ENCODE measurements at regions of chr11 and their contacts with region 1.

Region 1: GRCh38 chr11:35822815-35823495 is 120.9 kb upstream of the LDLRAD3 start:
- DNase-seq: no peak
- H3K4me3 ChIP-seq: no peak overlapping the region
- H3K27ac ChIP-seq: no peak overlapping the region
- H3K4me1 ChIP-seq: peaks cover 0 to 2% (median 0%) of the 10 kb centered on the region in 4 experiments; a peak in 1 of 7 replicates
- H3K27me3 ChIP-seq: peaks cover 0 to 2% (median 0%) of the 10 kb centered on the region in 4 experiments; a peak in 1 of 7 replicates
- CTCF ChIP-seq: no peak
- EP300 ChIP-seq: no peak
- POLR2A ChIP-seq: no peak
- RAD21 ChIP-seq: no peak

Region 2: GRCh38 chr11:35785287-35786167 is 37.4 kb before region 1 on chr11:
- CTCF ChIA-PET with region 1: interaction called, 17 read pairs
- POLR2A ChIA-PET with region 1: no interaction called
- DNase-seq: no peak
- H3K4me3 ChIP-seq: no peak overlapping the region
- H3K27ac ChIP-seq: no peak overlapping the region
- H3K4me1 ChIP-seq: peaks cover 0 to 2% (median 0%) of the 10 kb centered on the region in 4 experiments; a peak in 1 of 7 replicates
- H3K27me3 ChIP-seq: no peaks in the 10 kb centered on the region
- CTCF ChIP-seq: no peak
- EP300 ChIP-seq: no peak
- POLR2A ChIP-seq: no peak
- RAD21 ChIP-seq: no peak

Region 3: GRCh38 chr11:35893796-35894475 is 71.0 kb after region 1 on chr11:
- CTCF ChIA-PET with region 1: interaction called, 13 read pairs
- POLR2A ChIA-PET with region 1: interaction called, 3 read pairs
- DNase-seq: no peak
- H3K4me3 ChIP-seq: no peak overlapping the region
- H3K27ac ChIP-seq: no peak overlapping the region
- H3K4me1 ChIP-seq: peaks cover 0 to 4% (median under 1%) of the 10 kb centered on the region in 4 experiments; a peak in 3 of 7 replicates
- H3K27me3 ChIP-seq: no peaks in the 10 kb centered on the region
- CTCF ChIP-seq: no peak
- EP300 ChIP-seq: no peak
- POLR2A ChIP-seq: no peak
- RAD21 ChIP-seq: no peak

Region 4: DNA sequence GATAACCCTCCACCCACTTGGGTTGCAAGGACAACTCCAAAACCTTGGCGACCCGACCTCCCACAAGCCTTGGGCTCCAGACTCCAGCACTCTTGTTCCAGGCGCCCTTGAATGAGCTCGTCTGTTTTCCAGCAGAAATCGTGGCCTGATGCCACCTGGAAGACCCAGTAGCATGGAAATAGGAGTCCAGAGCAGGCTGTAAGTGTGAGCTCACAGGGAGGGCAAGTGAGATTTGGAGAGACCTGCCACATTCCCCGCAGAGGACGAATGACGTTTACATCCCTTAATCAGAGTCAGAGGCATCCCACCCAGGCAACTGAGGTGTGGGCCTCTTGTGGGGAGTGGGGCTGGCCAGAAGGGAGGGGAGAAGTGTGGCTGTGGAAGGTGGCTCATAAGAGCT is 192.8 kb after region 1 on chr11:
- CTCF ChIA-PET with region 1: interaction called, 13 read pairs
- POLR2A ChIA-PET with region 1: no interaction called
- DNase-seq: no peak
- H3K4me3 ChIP-seq: no peak overlapping the region
- H3K27ac ChIP-seq: no peak overlapping the region
- H3K4me1 ChIP-seq: peaks cover 0 to 11% (median 2%) of the 10 kb centered on the region in 4 experiments; a peak in 3 of 7 replicates
- H3K27me3 ChIP-seq: no peaks in the 10 kb centered on the region
- CTCF ChIP-seq: no peak
- EP300 ChIP-seq: no peak
- POLR2A ChIP-seq: no peak
- RAD21 ChIP-seq: no peak

Region 5: DNA sequence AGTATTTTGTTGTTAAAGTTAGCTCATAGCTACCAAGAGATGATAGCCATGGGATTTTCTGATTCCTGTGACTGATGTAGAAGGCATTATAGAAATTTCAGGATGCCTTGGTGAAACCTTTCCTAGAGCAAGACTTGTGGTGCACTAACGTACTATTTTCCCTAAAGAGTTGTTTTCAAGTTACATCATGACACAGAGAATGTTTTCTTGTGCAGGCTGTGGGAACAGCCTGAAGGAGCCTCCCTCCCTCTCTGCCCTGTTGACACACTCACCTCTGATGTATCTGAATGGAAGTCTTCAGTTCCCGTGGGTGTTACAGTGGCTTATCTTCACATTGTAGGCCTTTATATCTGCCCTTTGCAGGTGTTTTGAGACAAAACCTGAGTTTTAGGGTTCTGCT is 242.5 kb after region 1 on chr11:
- CTCF ChIA-PET with region 1: interaction called, 55 read pairs
- POLR2A ChIA-PET with region 1: interaction called, 7 read pairs
- DNase-seq: no peak
- H3K4me3 ChIP-seq: no peak overlapping the region
- H3K27ac ChIP-seq: no peak overlapping the region
- H3K4me1 ChIP-seq: peaks cover 2 to 10% (median 5%) of the 10 kb centered on the region in 4 experiments; a peak in 4 of 7 replicates
- H3K27me3 ChIP-seq: no peaks in the 10 kb centered on the region
- CTCF ChIP-seq: no peak
- EP300 ChIP-seq: no peak
- POLR2A ChIP-seq: no peak
- RAD21 ChIP-seq: no peak

Region 6: DNA sequence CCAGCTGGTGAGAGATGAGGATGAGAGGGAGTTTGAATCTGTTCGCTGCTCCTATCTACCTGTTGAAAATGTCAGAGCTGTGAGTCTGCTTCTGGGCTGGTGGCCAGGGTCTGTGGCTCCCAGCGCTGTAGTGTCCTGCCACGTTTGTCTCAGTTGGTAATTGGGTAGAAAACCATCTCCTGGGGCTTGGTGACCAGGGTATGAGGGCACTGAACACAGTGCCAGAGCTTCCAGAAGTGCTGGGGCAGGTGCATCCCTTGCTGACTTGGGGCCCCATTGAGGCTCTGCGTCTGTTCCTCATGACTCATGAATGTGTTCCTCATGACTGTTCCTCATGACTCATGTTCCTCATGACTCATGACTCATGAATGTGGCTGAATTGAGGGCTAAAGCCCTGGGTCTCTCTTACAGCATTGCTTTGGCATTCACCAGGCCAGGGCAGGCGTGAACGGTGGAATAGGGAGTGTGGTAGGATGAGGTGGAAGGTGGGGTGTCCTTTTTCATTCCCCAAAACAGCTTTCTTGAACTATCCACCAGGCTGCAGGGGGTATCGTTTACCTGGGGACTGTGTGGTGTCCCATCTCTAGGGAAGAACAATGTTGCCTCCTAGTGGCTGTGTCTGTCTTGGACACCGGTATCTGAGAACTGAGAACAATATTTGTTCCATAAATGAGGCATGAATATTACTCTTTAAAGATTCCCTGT is 326.7 kb after region 1 on chr11:
- CTCF ChIA-PET with region 1: interaction called, 17 read pairs
- POLR2A ChIA-PET with region 1: no interaction called
- DNase-seq: peak in 1 of 2 experiments; percentile 75
- H3K4me3 ChIP-seq: no peak overlapping the region
- H3K27ac ChIP-seq: peak overlapping the region; percentile 60; the same call in 1 of the 2 replicates
- H3K4me1 ChIP-seq: peaks cover 0 to 16% (median 4%) of the 10 kb centered on the region in 4 experiments; a peak in 4 of 7 replicates
- H3K27me3 ChIP-seq: no peaks in the 10 kb centered on the region
- CTCF ChIP-seq: peak; percentile 45 to 69 (median 53)
- EP300 ChIP-seq: no peak
- POLR2A ChIP-seq: no peak
- RAD21 ChIP-seq: peak; percentile 76 to 79

Region 7: GRCh38 chr11:36577859-36578258 is 754.9 kb after region 1 on chr11:
- CTCF ChIA-PET with region 1: no interaction called
- POLR2A ChIA-PET with region 1: no interaction called
- DNase-seq: no peak
- H3K4me3 ChIP-seq: no peak overlapping the region
- H3K27ac ChIP-seq: no peak overlapping the region
- H3K4me1 ChIP-seq: no peaks in the 10 kb centered on the region
- H3K27me3 ChIP-seq: no peaks in the 10 kb centered on the region
- CTCF ChIP-seq: no peak
- EP300 ChIP-seq: no peak
- POLR2A ChIP-seq: no peak
- RAD21 ChIP-seq: no peak

Measured in H1 (cell line).